ENCODE measurements at regions of chr4 and their contacts with region 1.

Region 1: GRCh38 chr4:42906891-42907759 is 14.6 kb downstream of the GRXCR1 start:
- DNase-seq: no peak

Region 2: DNA sequence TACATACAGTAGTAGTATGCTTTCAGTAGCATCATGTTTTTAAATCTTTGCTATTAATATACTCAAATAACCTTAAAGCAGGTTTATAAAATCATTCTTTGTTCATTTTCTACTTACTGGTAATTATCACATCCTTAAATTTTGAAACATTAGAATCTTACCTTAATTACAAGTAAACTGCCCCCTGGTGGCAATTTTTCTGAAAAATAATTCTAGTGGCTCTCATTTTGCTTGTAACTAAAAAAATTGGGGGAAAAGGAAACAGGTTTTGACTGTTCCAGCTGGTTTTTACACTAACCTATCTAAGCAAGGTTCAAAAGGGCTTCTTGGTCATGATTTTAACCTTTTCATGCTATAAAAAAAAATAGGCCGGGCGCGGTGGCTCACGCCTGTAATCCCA is 944.0 kb before region 1 on chr4:
- intact Hi-C with region 1: loop called in 1 of 2 experiments (anchors 10 kb)
- DNase-seq: no peak